B cell (primary cell): ENCODE measurements at regions of chr19 and their contacts with region 1.

Region 1: DNA sequence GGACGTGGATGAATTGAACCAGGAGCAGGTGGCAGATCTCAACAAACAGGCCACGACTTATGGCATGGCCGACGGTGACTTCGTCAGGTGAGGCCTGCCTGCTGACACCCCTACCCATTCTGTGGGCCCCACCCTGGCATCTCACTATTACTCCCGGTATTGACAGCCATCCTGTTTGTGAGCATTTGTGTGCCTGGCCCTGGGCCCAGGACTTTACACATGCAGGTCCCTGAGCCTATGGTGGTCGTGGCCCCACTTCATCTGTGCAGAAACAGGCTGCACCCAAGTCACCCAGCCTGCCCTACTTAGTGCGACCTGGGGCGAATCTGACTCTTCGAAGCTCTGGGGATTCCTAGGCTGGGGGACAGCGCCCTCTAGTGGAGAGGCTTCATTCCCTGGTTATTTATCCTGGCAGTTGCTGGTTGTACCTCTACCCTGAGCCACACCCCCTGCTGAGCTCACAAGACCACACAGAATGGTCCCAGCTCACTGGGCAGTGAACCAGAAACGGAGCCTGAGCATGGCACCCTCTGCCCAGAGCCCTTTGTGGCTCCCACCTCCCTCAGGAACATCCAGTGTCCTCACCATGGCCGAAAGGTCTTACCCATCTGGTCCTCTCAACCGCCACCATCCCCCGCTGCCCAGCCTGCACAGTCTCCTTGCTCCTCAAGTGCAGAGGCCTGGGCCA is 16.9 kb downstream of the ZNF296 start:
- DNase-seq: peak; percentile 90
- ATAC-seq: peak; percentile 88
- H3K4me3 ChIP-seq: no peak overlapping the region
- H3K4me3 Mint-ChIP-seq: no peak overlapping the region
- H3K27ac ChIP-seq: no peak overlapping the region
- H3K27ac Mint-ChIP-seq: peak overlapping the region; percentile 84
- H3K4me1 ChIP-seq: peaks cover 8 to 34% of the 10 kb centered on the region in 2 donors
- H3K4me1 Mint-ChIP-seq: peaks cover 40% of the 10 kb centered on the region
- H3K27me3 ChIP-seq: no peaks in the 10 kb centered on the region
- H3K27me3 Mint-ChIP-seq: no peaks in the 10 kb centered on the region
- CTCF ChIP-seq: peak; percentile 90

Region 2: DNA sequence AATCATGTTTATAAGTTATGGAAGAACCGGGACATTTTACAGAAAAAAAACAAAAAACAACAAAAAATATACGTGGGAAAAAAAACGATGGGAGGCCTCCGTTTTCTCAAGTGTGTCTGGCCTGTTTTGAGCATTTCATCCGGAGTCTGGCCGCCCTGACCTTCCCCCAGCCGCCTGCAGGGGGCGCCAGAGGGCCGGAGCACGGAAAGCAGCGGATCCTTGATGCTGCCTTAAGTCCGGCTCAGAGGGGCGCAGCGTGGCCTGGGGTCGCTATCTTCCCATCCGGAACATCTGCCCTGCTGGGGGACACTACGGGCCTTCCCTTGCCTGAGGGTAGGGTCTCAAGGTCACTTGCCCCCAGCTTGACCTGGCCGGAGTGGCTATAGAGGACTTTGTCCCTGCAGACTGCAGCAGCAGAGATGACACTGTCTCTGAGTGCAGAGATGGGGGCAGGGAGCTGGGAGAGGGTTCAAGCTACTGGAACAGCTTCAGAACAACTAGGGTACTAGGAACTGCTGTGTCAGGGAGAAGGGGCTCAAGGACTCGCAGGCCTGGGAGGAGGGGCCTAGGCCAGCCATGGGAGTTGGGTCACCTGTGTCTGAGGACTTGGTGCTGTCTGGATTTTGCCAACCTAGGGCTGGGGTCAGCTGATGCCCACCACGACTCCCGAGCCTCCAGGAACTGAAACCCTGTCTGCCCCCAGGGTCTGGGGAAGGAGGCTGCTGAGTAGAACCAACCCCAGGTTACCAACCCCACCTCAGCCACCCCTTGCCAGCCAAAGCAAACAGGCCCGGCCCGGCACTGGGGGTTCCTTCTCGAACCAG is 155.6 kb before region 1 on chr19:
- CTCF ChIA-PET with region 1: interaction called, 18 read pairs
- POLR2A ChIA-PET with region 1: no interaction called
- intact Hi-C with region 1: loop called (anchors 1 kb)
- DNase-seq: peak; percentile 79
- ATAC-seq: peak; percentile 69
- H3K4me3 ChIP-seq: no peak overlapping the region
- H3K4me3 Mint-ChIP-seq: no peak overlapping the region
- H3K27ac ChIP-seq: no peak overlapping the region
- H3K27ac Mint-ChIP-seq: no peak overlapping the region
- H3K4me1 ChIP-seq: peaks cover 15 to 19% of the 10 kb centered on the region in 2 donors
- H3K4me1 Mint-ChIP-seq: peaks cover 16% of the 10 kb centered on the region
- H3K27me3 ChIP-seq: peaks cover 0 to 26% (median 10%) of the 10 kb centered on the region in 4 experiments
- H3K27me3 Mint-ChIP-seq: peaks cover 18% of the 10 kb centered on the region
- CTCF ChIP-seq: peak; percentile 98

Region 3: GRCh38 chr19:44939668-44940067 is 119.8 kb before region 1 on chr19:
- CTCF ChIA-PET with region 1: no interaction called
- POLR2A ChIA-PET with region 1: no interaction called
- intact Hi-C with region 1: no loop called
- DNase-seq: no peak
- ATAC-seq: no peak
- H3K4me3 ChIP-seq: no peak overlapping the region
- H3K4me3 Mint-ChIP-seq: no peak overlapping the region
- H3K27ac ChIP-seq: no peak overlapping the region
- H3K27ac Mint-ChIP-seq: no peak overlapping the region
- H3K4me1 ChIP-seq: peaks cover 4 to 11% of the 10 kb centered on the region in 2 donors
- H3K4me1 Mint-ChIP-seq: peaks cover 12% of the 10 kb centered on the region
- H3K27me3 ChIP-seq: no peaks in the 10 kb centered on the region
- H3K27me3 Mint-ChIP-seq: no peaks in the 10 kb centered on the region
- CTCF ChIP-seq: no peak

Region 4: GRCh38 chr19:44988896-44989556 is 70.4 kb before region 1 on chr19:
- CTCF ChIA-PET with region 1: interaction called, 97 read pairs
- POLR2A ChIA-PET with region 1: interaction called, 5 read pairs
- intact Hi-C with region 1: loop called (anchors 1 kb)
- DNase-seq: peak; percentile 78
- ATAC-seq: peak; percentile 86
- H3K4me3 ChIP-seq: no peak overlapping the region
- H3K4me3 Mint-ChIP-seq: no peak overlapping the region
- H3K27ac ChIP-seq: no peak overlapping the region
- H3K27ac Mint-ChIP-seq: peak overlapping the region; percentile 65
- H3K4me1 ChIP-seq: no peaks in the 10 kb centered on the region
- H3K4me1 Mint-ChIP-seq: peaks cover 4% of the 10 kb centered on the region
- H3K27me3 ChIP-seq: no peaks in the 10 kb centered on the region
- H3K27me3 Mint-ChIP-seq: no peaks in the 10 kb centered on the region
- CTCF ChIP-seq: peak; percentile 73

Region 5: GRCh38 chr19:45016388-45017319 is 42.8 kb before region 1 on chr19:
- CTCF ChIA-PET with region 1: interaction called, 26 read pairs
- POLR2A ChIA-PET with region 1: no interaction called
- intact Hi-C with region 1: loop called (anchors 1 kb)
- DNase-seq: peak; percentile 89
- ATAC-seq: peak; percentile 79
- H3K4me3 ChIP-seq: peak overlapping the region in 2 of 5 experiments; percentile 26 to 33
- H3K4me3 Mint-ChIP-seq: peak overlapping the region; percentile 81
- H3K27ac ChIP-seq: peak overlapping the region; percentile 84 to 93
- H3K27ac Mint-ChIP-seq: peak overlapping the region; percentile 94
- H3K4me1 ChIP-seq: peaks cover 7 to 26% of the 10 kb centered on the region in 2 donors
- H3K4me1 Mint-ChIP-seq: peaks cover 18% of the 10 kb centered on the region
- H3K27me3 ChIP-seq: no peaks in the 10 kb centered on the region
- H3K27me3 Mint-ChIP-seq: no peaks in the 10 kb centered on the region
- CTCF ChIP-seq: peak; percentile 70

Region 6: DNA sequence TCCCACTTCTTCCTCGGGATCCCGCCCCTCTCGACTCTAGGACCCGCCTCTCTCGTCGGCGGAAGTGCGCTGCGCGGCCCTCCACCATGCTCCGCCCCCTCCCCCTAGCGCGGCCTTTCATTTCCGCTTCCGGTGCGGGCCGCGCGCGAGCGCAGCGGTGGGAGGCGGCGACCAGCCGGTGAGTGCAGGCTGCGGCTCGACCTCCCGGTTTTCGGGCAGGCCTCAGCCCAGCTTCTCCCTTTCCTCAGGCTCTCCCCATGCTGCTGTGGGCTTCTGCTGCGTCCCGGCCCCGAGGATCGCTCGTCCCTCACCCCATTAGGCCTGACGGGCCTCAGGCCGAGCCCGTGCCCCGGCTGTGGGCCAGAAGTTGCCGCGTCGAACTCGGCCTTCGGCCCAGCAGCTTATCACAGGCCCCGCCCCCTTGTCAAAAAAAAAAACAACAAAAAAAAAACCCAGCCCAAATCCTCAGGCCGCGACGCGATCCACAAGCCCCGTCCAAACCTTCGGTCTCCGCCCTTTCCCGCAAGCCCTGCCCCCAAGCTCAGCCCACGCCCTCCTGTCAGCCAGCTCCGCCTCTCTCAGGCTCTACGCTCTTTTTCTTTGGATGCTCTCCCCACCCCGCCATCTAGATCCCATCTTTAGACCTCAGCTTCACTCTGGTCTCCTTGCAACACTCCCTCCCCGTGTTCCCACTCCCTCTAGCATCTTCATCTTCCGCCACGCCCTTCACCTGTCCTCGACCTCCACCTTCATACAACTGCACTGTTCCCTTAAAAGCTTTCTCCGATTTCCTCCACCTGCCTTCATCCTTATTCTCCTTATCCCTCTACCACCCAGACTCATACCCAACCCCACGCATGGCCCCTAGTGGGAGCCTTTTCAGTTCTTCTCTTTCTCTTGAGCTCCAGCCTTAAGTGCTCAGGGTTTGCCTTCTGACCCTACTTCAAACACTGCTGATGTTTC is 20.2 kb before region 1 on chr19 and contains the start of gene CLASRP:
- CTCF ChIA-PET with region 1: interaction called, 21 read pairs
- POLR2A ChIA-PET with region 1: interaction called, 5 read pairs
- intact Hi-C with region 1: loop called (anchors 1 kb)
- DNase-seq: peak; percentile 93
- ATAC-seq: peak; percentile 89
- H3K4me3 ChIP-seq: peak within 1 kb of the TSS; percentile 51 to 96 (median 94)
- H3K4me3 Mint-ChIP-seq: peak within 1 kb of the TSS; percentile 96
- H3K27ac ChIP-seq: peak within 1 kb of the TSS; percentile 93 to 96
- H3K27ac Mint-ChIP-seq: peak within 1 kb of the TSS; percentile 96
- H3K4me1 ChIP-seq: peaks cover 26 to 35% of the 10 kb centered on the region in 2 donors
- H3K4me1 Mint-ChIP-seq: peaks cover 40% of the 10 kb centered on the region
- H3K27me3 ChIP-seq: no peaks in the 10 kb centered on the region
- H3K27me3 Mint-ChIP-seq: no peaks in the 10 kb centered on the region
- CTCF ChIP-seq: no peak
- total RNA-seq, gene CLASRP: 277 and 285 TPM in 2 replicates

Region 7: GRCh38 chr19:45047188-45047797 is 12.1 kb before region 1 on chr19:
- CTCF ChIA-PET with region 1: interaction called, 21 read pairs
- POLR2A ChIA-PET with region 1: interaction called, 6 read pairs
- intact Hi-C with region 1: no loop called
- DNase-seq: peak; percentile 81
- ATAC-seq: peak; percentile 46
- H3K4me3 ChIP-seq: peak overlapping the region; percentile 34 to 71 (median 51)
- H3K4me3 Mint-ChIP-seq: peak overlapping the region; percentile 90
- H3K27ac ChIP-seq: peak overlapping the region; percentile 61 to 78
- H3K27ac Mint-ChIP-seq: peak overlapping the region; percentile 89
- H3K4me1 ChIP-seq: peaks cover 65 to 69% of the 10 kb centered on the region in 2 donors
- H3K4me1 Mint-ChIP-seq: peaks cover 68% of the 10 kb centered on the region
- H3K27me3 ChIP-seq: no peaks in the 10 kb centered on the region
- H3K27me3 Mint-ChIP-seq: no peaks in the 10 kb centered on the region
- CTCF ChIP-seq: peak; percentile 43